ENCODE measurements at regions of chr6 and their contacts with region 1.

Region 1: GRCh38 chr6:138849791-138850190 is 53.9 kb downstream of the ECT2L start:
- DNase-seq: no peak
- ATAC-seq: no peak
- H3K4me3 ChIP-seq: no peak overlapping the region
- H3K27ac ChIP-seq: no peak overlapping the region
- H3K4me1 ChIP-seq: no peaks in the 10 kb centered on the region
- H3K27me3 ChIP-seq: no peaks in the 10 kb centered on the region
- CTCF ChIP-seq: no peak

Region 2: DNA sequence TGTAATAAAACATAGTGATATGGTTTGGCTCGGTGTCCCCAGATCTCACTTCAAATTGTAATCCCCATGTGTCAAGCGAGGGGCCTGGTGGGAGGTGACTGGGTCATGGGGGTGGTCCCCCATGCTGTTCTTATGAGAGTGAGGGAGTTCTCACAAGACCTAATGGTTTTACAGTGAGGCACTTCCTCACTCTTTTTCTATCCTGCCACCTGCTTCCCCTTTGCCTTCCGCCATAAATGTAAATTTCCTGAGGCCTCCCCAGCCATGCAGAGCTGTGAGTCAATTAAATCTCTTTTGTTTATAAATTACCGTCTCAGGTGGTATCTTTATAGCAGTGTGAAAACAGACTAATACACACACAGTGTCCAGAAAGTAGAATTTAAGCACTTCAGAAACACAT is 59.7 kb after region 1 on chr6:
- CTCF ChIA-PET with region 1: no interaction called
- POLR2A ChIA-PET with region 1: interaction called, 10 read pairs
- intact Hi-C with region 1: no loop called
- DNase-seq: no peak
- ATAC-seq: no peak
- H3K4me3 ChIP-seq: no peak overlapping the region
- H3K27ac ChIP-seq: no peak overlapping the region
- H3K4me1 ChIP-seq: no peaks in the 10 kb centered on the region
- H3K27me3 ChIP-seq: no peaks in the 10 kb centered on the region
- CTCF ChIP-seq: no peak

Region 3: GRCh38 chr6:138920906-138921305 is 71.1 kb after region 1 on chr6:
- CTCF ChIA-PET with region 1: no interaction called
- POLR2A ChIA-PET with region 1: no interaction called
- intact Hi-C with region 1: no loop called
- DNase-seq: no peak
- ATAC-seq: no peak
- H3K4me3 ChIP-seq: no peak overlapping the region
- H3K27ac ChIP-seq: no peak overlapping the region
- H3K4me1 ChIP-seq: no peaks in the 10 kb centered on the region
- H3K27me3 ChIP-seq: no peaks in the 10 kb centered on the region
- CTCF ChIP-seq: no peak